ENCODE measurements at regions of chr12 and their contacts with region 1.

Region 1: GRCh38 chr12:22624870-22625761 is at the start of gene ETNK1:
- DNase-seq: peak; percentile 86

Region 2: DNA sequence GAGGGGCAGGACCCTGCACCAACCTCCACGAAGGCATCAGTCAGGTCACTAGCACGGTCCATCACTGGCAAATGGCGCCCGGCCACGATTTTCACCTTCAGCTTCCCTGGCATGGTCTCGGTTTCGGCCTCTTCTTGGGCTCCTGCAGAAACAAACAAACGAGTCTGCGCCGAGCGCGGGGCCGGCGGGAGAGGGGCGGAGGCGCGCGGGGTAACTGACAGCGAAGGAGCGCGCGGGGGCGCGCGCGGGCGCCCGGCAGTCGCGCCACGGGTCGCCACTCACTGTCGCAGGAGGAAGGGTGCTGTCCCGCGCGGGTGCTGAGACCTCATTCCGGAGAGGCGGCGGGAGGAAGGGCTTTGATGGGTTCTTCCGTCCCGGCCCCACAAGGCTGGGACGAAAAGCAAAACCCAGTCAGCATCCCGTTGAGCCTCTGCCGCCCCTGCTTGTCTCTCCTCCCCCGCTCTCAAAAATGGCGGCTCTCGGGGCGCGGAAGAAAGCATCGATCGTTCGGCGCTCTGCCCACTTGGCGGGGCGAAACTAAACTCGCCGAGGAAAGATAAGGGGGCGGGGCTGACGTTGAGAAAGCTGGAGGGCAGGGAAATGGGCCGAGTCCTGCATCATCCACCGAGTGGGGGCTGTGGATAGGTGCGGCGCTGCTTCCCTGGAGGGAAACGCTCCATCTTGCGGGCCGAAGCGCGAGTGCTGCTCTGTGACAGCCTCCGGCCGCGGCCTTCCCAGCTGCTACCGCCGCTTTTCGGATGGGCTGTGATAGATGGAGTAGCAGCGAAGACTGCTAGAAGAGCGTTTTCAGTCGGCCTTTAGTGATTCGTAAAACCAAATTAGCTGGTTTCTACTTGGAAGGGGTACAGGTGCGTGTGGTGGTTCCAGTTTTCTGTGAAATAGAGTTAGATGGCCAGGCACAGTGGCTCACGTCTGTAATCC is 80.8 kb before region 1 on chr12 and contains the start of gene C2CD5:
- CTCF ChIA-PET with region 1: no interaction called
- POLR2A ChIA-PET with region 1: interaction called, 21 read pairs
- DNase-seq: peak; percentile 91

Region 3: GRCh38 chr12:22610131-22610530 is 15.0 kb before region 1 on chr12:
- CTCF ChIA-PET with region 1: no interaction called
- POLR2A ChIA-PET with region 1: interaction called, 10 read pairs
- DNase-seq: no peak

Region 4: GRCh38 chr12:22635812-22636211 is 10.7 kb after region 1 on chr12:
- CTCF ChIA-PET with region 1: interaction called, 4 read pairs
- POLR2A ChIA-PET with region 1: interaction called, 11 read pairs
- DNase-seq: no peak

Measured in HEK293T (cell line).